HCT116 (cell line): ENCODE measurements at regions of chr22 and their contacts with region 1.

Region 1: DNA sequence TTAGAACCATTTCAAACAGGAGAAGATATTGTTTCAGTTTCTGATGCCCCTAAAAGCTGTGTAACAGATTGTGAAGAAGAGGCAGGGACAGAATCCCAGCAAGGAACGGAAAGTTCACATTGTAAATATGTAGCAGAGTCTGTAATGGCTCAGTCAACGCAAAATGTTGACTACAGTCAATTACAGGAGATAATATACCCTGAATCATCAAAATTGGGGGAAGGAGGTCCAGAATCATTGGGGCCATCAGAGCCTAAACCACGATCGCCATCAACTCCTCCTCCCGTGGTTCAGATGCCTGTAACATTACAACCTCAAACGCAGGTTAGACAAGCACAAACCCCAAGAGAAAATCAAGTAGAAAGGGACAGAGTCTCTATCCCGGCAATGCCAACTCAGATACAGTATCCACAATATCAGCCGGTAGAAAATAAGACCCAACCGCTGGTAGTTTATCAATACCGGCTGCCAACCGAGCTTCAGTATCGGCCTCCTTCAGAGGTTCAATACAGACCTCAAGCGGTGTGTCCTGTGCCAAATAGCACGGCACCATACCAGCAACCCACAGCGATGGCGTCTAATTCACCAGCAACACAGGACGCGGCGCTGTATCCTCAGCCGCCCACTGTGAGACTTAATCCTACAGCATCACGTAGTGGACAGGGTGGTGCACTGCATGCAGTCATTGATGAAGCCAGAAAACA is 40.8 kb downstream of the IGLL1 start:
- DNase-seq: peak; percentile 81
- ATAC-seq: peak; percentile 99
- H3K4me3 ChIP-seq: peak overlapping the region; percentile 20 to 27; a peak in 3 of 4 replicates
- H3K27ac ChIP-seq: no peak overlapping the region
- H3K4me1 ChIP-seq: peaks cover 0 to 7% of the 10 kb centered on the region in 2 experiments; a peak in 2 of 4 replicates
- H3K27me3 ChIP-seq: no peaks in the 10 kb centered on the region
- CTCF ChIP-seq: peak; percentile 76 to 98 (median 87)
- POLR2A ChIP-seq: no peak
- RAD21 ChIP-seq: peak; percentile 90

Region 2: GRCh38 chr22:23315341-23315917 is 223.9 kb before region 1 on chr22:
- CTCF ChIA-PET with region 1: no interaction called
- POLR2A ChIA-PET with region 1: no interaction called
- RAD21 ChIA-PET with region 1: no interaction called
- intact Hi-C with region 1: loop called (anchors 2 kb)
- DNase-seq: peak; percentile 23
- ATAC-seq: peak; percentile 71
- H3K4me3 ChIP-seq: no peak overlapping the region
- H3K27ac ChIP-seq: no peak overlapping the region
- H3K4me1 ChIP-seq: no peaks in the 10 kb centered on the region
- H3K27me3 ChIP-seq: no peaks in the 10 kb centered on the region
- CTCF ChIP-seq: peak; percentile 49 to 62 (median 58); a peak in 5 of 6 replicates
- POLR2A ChIP-seq: no peak
- RAD21 ChIP-seq: peak; percentile 63

Region 3: GRCh38 chr22:23402275-23403151 is 136.8 kb before region 1 on chr22:
- CTCF ChIA-PET with region 1: no interaction called
- POLR2A ChIA-PET with region 1: no interaction called
- RAD21 ChIA-PET with region 1: no interaction called
- intact Hi-C with region 1: loop called (anchors 2 kb)
- DNase-seq: peak; percentile 66
- ATAC-seq: peak; percentile 93
- H3K4me3 ChIP-seq: peak overlapping the region; percentile 50 to 65
- H3K27ac ChIP-seq: peak overlapping the region; percentile 56; the same call in 1 of the 2 replicates
- H3K4me1 ChIP-seq: peaks cover 11 to 17% of the 10 kb centered on the region in 2 experiments; a peak in 3 of 4 replicates
- H3K27me3 ChIP-seq: peaks cover 3% of the 10 kb centered on the region; the same call in 1 of the 2 replicates
- CTCF ChIP-seq: peak; percentile 59 to 92 (median 77)
- POLR2A ChIP-seq: no peak
- RAD21 ChIP-seq: peak; percentile 71

Region 4: GRCh38 chr22:23591201-23591791 is 52.0 kb after region 1 on chr22:
- CTCF ChIA-PET with region 1: interaction called, 17 read pairs
- POLR2A ChIA-PET with region 1: no interaction called
- RAD21 ChIA-PET with region 1: interaction called, 3 to 6 read pairs
- intact Hi-C with region 1: loop called (anchors 1 kb)
- DNase-seq: peak; percentile 51
- ATAC-seq: peak; percentile 97
- H3K4me3 ChIP-seq: no peak overlapping the region
- H3K27ac ChIP-seq: no peak overlapping the region
- H3K4me1 ChIP-seq: no peaks in the 10 kb centered on the region
- H3K27me3 ChIP-seq: no peaks in the 10 kb centered on the region; the same call in 1 of the 2 replicates
- CTCF ChIP-seq: peak; percentile 72 to 95 (median 94)
- POLR2A ChIP-seq: no peak
- RAD21 ChIP-seq: peak; percentile 75

Region 5: DNA sequence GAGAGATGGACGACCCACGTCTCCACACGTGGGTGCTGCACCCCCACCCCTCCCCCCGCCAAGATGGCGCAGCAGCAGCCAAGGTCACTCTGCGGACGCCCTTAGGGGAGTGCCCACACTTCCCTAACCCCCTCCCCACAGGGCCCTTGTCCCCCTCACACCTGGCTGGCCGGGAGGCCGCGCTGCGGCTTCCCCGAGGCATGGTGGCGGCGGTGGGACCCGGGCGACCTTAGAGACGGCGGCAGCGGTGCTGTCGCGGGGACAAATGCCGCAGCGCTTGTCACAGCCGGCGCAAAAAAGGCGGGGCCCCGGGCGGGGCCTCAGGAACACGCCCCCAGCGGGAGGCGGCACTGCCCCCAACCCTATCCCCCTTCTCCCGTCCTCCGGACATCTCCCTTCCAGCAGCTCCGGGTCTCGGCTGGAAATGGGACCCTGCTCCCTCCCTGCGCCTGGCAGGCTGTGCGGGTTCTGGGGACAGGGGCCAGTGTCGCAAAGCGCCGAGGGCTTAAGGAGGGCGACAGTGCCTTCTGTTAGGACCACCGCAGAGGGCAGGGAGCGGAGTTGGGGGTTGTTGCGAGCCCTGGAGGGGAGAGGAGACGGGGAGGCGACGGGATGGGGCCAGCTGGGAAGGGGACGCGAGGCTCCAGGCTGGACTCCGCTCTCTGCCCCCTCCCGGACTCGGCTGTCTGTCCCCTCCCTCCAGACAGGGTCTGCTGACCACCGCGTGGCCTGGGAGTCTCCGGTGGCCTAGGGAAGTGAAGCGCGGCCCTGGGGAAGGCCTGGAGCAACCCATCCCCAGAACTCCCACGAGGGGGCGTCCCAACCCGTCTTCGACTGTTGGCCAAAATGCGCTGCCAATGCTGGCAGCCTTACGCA is 228.6 kb after region 1 on chr22 and contains the start of gene CHCHD10:
- CTCF ChIA-PET with region 1: no interaction called
- POLR2A ChIA-PET with region 1: no interaction called
- RAD21 ChIA-PET with region 1: no interaction called
- intact Hi-C with region 1: loop called (anchors 2 kb)
- DNase-seq: peak; percentile 60
- ATAC-seq: peak; percentile 76
- H3K4me3 ChIP-seq: peak within 1 kb of the TSS; percentile 73 to 86
- H3K27ac ChIP-seq: peak within 1 kb of the TSS; percentile 89
- H3K4me1 ChIP-seq: peaks cover 22 to 67% of the 10 kb centered on the region in 2 experiments
- H3K27me3 ChIP-seq: no peaks in the 10 kb centered on the region
- CTCF ChIP-seq: peak; percentile 55 to 79 (median 76); a peak in 5 of 6 replicates
- POLR2A ChIP-seq: peak; percentile 66
- RAD21 ChIP-seq: peak; percentile 70
- total RNA-seq, gene CHCHD10: 279 TPM

Region 6: GRCh38 chr22:23849009-23850006 is 310.0 kb after region 1 on chr22:
- CTCF ChIA-PET with region 1: interaction called, 10 read pairs
- POLR2A ChIA-PET with region 1: no interaction called
- RAD21 ChIA-PET with region 1: no interaction called
- intact Hi-C with region 1: loop called (anchors 5 kb)
- DNase-seq: peak; percentile 41
- ATAC-seq: peak; percentile 91
- H3K4me3 ChIP-seq: peak overlapping the region in 1 of 2 experiments; percentile 8; a peak in 1 of 4 replicates
- H3K27ac ChIP-seq: no peak overlapping the region; the same call in 1 of the 2 replicates
- H3K4me1 ChIP-seq: peaks cover 2 to 12% of the 10 kb centered on the region in 2 experiments; a peak in 2 of 4 replicates
- H3K27me3 ChIP-seq: no peaks in the 10 kb centered on the region
- CTCF ChIP-seq: peak; percentile 90 to 98 (median 94)
- POLR2A ChIP-seq: no peak
- RAD21 ChIP-seq: peak; percentile 98